Dendritic cell treated with granulocyte-macrophage colony-stimulating factor and Interleukin-4, amounts not matched to agents 40 ng/mL and 50 ng/mL, for 4 days (primary cell): ENCODE measurements at regions of chr14 and their contacts with region 1.

Region 1: GRCh38 chr14:81363746-81364378 is 36.3 kb downstream of the STON2 start:
- H3K4me3 Mint-ChIP-seq: no peak overlapping the region
- H3K27ac Mint-ChIP-seq: no peak overlapping the region
- H3K4me1 Mint-ChIP-seq: no peaks in the 10 kb centered on the region
- H3K27me3 Mint-ChIP-seq: peaks cover 8% of the 10 kb centered on the region

Region 2: DNA sequence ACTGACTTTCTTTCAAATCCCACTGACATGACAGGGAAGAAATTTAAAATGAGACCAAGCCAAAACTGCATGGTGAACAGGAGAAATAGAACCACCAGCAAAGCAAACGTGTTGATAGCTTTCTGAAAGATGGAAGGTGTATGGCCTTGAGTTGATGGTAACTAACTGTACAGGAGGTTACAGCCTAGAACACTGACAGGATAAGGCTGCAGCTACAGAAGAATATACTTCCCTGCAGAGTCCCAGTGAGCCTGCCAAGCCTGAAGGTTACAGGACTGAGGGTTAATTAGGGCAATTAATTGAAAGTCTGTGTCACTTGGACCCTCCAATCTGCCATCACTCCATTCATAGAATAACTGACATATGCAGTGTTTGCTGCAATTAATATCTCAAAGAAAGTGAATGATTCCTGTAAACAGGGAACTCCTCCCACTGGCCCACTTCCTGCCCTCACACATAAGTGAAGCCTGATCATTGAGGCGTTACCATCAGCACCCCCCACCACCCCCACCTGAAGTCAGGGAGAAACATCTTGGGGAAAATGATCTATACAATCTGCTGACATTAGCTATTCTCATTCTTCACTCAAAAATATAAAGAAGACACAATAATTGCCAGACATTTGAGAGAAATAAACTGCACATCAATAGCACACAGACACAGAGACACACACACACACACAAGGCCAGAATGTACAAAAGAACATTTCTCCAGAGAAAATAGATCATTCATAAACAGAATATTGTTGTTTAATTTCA is 216.5 kb before region 1 on chr14:
- intact Hi-C with region 1: no loop called
- H3K4me3 Mint-ChIP-seq: no peak overlapping the region
- H3K27ac Mint-ChIP-seq: no peak overlapping the region
- H3K4me1 Mint-ChIP-seq: no peaks in the 10 kb centered on the region
- H3K27me3 Mint-ChIP-seq: no peaks in the 10 kb centered on the region

Region 3: DNA sequence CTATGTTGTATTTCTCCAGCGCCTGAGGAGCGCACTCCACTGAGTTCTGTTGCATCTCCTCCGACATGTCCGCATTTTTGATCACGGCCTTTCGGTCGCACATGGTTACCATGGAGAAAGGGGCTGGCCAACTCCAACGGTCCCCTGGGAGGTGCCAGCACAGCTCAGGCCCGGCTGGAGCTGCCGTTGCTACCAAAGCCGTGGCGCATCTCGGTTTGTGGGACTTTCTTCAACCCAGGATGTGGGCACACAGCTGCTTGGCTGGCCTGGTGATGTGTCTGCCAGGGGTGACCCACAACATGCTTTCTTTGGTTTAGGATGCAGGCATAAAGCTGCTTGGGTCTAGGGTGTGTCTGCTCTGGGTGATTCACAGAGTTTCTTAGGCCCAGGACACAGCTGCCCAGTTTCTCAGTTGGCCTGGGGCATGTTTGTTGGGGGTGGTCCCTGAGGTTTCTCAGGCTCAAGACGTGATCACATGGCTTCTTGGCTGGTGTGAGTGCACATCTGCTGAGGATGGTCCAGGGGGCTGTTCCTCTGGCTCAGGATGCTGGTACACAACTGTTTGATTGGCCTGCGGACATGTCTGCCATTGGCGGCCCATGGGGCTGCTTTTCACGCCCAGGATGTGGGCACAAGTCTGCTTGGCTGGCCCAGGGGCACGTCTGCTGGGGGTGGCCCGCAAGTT is 117.3 kb before region 1 on chr14:
- intact Hi-C with region 1: no loop called
- H3K4me3 Mint-ChIP-seq: no peak overlapping the region
- H3K27ac Mint-ChIP-seq: no peak overlapping the region
- H3K4me1 Mint-ChIP-seq: no peaks in the 10 kb centered on the region
- H3K27me3 Mint-ChIP-seq: no peaks in the 10 kb centered on the region

Region 4: DNA sequence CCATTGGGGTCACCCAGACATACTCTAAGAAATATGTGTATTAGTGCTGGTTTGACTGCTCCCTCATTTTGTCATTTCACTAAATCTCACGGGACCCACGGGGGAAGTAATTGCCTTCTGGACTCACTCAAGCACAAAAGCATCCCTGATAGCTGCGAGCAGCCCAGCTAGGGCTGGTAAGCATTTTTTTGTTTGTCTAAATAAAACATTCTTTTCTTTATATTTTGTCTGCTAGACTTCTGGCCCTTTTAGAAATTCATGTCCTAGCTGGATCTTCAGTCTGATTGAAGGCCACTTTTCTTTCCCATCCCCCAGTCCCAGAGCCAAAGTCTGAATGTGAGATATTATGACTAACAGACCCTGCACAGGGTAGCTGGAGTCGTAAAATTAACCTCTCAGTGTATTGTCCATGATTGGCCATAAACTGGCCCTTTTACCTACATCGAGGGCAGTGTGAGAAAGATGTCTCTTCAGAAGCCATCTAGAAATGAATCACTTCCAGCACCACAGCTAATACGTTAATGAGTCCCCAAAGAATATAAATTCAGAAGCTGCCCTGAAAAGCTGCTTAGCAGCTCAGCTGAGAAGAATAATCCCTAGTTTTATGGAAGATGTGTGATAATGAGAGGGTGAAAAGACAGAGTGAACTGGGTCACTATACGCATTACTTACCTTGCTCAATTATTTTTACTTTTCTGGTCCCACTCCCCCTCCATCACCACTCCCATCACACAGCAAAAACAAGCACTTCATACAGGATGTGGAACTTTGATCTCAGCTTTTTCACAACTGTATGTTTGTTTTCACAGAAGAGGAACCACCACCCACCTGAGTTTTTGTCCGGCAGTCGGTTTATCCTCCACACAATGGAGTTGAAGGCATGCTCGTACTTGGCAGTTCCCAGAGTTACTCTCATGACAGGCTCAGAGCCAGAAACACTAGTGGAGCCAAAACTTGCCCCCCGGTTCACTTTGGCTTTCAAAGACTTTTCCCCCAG is 87.5 kb before region 1 on chr14:
- intact Hi-C with region 1: loop called (anchors 5 kb)
- H3K4me3 Mint-ChIP-seq: no peak overlapping the region
- H3K27ac Mint-ChIP-seq: no peak overlapping the region
- H3K4me1 Mint-ChIP-seq: peaks cover 16% of the 10 kb centered on the region
- H3K27me3 Mint-ChIP-seq: peaks cover 10% of the 10 kb centered on the region

Region 5: GRCh38 chr14:81655423-81656314 is 291.8 kb after region 1 on chr14:
- intact Hi-C with region 1: no loop called
- H3K4me3 Mint-ChIP-seq: no peak overlapping the region
- H3K27ac Mint-ChIP-seq: no peak overlapping the region
- H3K4me1 Mint-ChIP-seq: no peaks in the 10 kb centered on the region
- H3K27me3 Mint-ChIP-seq: no peaks in the 10 kb centered on the region